B cell (primary cell): ENCODE measurements at regions of chr5 and their contacts with region 1.

Region 1: DNA sequence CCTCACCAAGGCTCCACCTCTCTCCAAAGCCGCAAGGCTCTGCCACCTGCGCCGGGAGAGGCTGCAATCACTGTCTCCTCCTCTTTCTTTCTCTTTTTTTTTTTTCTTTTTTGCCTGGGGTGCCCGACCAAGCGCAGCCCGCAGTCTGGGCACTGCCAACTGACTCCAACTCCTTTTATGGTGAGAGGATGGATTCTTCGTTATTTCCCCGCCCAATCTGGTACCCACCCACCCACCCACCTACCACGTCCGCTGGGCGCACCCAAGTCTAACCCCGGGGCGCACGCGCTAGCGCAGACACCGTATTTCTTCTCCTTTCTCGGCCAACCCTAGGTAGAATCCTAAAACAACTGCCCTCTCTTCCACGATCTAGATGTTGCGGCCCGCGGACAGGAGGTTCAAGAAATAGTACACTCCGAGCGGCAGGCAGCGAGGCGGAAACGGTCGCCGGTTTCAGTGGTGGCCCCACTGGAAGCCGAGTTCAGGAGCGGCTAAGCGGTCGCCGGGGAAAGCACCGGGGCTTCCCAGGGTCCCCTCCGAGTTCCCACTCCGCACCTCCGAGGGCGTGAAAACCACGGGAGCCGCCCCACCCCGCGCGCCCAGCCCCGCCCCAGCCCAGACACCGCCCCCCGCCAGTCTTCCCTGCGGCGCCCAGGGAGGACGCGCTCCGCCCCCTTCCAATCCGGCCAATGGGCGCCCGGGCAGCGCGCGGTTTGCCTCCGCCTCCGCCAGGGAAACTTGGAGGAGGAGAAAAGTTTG is 381 bp upstream of the PTGER4 start:
- DNase-seq: peak; percentile 86
- ATAC-seq: peak; percentile 77
- H3K4me3 ChIP-seq: peak overlapping the region; percentile 80 to 89 (median 84)
- H3K4me3 Mint-ChIP-seq: peak overlapping the region; percentile 94
- H3K27ac ChIP-seq: peak overlapping the region; percentile 89 to 96
- H3K27ac Mint-ChIP-seq: peak overlapping the region; percentile 92
- H3K4me1 ChIP-seq: peaks cover 28 to 39% of the 10 kb centered on the region in 2 donors
- H3K4me1 Mint-ChIP-seq: peaks cover 49% of the 10 kb centered on the region
- H3K27me3 ChIP-seq: no peaks in the 10 kb centered on the region
- H3K27me3 Mint-ChIP-seq: no peaks in the 10 kb centered on the region
- CTCF ChIP-seq: no peak

Region 2: DNA sequence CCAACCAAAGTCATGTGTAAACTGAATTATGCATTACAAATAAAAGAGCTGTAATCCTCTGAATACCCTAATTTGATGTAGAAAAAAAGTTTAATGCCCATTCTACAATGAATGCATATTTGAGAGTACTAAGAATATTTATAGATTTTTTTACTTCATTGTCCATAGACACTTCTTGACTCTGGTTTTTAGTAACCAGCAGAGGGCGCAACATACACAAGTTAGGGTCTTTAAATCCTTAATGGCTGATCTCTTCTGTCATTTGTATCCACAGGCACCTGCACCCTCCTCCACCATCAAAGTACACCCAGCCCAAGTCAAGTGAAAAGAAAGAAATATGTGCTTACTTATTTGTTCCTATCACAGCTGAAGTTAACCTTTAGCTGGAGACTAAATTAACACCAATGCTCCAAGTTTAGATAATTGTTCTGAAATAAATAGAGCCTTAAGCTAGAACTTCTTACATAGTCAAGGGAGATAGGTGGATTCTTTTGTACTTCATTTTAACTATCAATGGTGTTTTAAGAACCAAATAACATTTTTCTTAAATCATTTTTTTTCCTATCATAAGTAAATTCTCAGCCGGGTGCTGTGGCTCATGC is 730.4 kb before region 1 on chr5:
- CTCF ChIA-PET with region 1: interaction called, 51 read pairs
- POLR2A ChIA-PET with region 1: no interaction called
- intact Hi-C with region 1: no loop called
- DNase-seq: peak; percentile 82
- ATAC-seq: peak; percentile 80
- H3K4me3 ChIP-seq: no peak overlapping the region
- H3K4me3 Mint-ChIP-seq: no peak overlapping the region
- H3K27ac ChIP-seq: no peak overlapping the region
- H3K27ac Mint-ChIP-seq: no peak overlapping the region
- H3K4me1 ChIP-seq: no peaks in the 10 kb centered on the region
- H3K4me1 Mint-ChIP-seq: peaks cover 2% of the 10 kb centered on the region
- H3K27me3 ChIP-seq: no peaks in the 10 kb centered on the region
- H3K27me3 Mint-ChIP-seq: no peaks in the 10 kb centered on the region
- CTCF ChIP-seq: peak; percentile 81

Region 3: GRCh38 chr5:40033411-40033810 is 645.9 kb before region 1 on chr5:
- CTCF ChIA-PET with region 1: interaction called, 3 read pairs
- POLR2A ChIA-PET with region 1: interaction called, 3 read pairs
- intact Hi-C with region 1: loop called (anchors 1 kb)
- DNase-seq: peak; percentile 94
- ATAC-seq: peak; percentile 98
- H3K4me3 ChIP-seq: peak overlapping the region in 1 of 5 experiments; percentile 20
- H3K4me3 Mint-ChIP-seq: peak overlapping the region; percentile 66
- H3K27ac ChIP-seq: peak overlapping the region; percentile 92
- H3K27ac Mint-ChIP-seq: peak overlapping the region; percentile 93
- H3K4me1 ChIP-seq: peaks cover 20 to 26% of the 10 kb centered on the region in 2 donors
- H3K4me1 Mint-ChIP-seq: peaks cover 31% of the 10 kb centered on the region
- H3K27me3 ChIP-seq: no peaks in the 10 kb centered on the region
- H3K27me3 Mint-ChIP-seq: no peaks in the 10 kb centered on the region
- CTCF ChIP-seq: no peak

Region 4: GRCh38 chr5:40486437-40487275 is 192.7 kb before region 1 on chr5:
- CTCF ChIA-PET with region 1: interaction called, 3 read pairs
- POLR2A ChIA-PET with region 1: no interaction called
- intact Hi-C with region 1: loop called (anchors 2 kb)
- DNase-seq: peak; percentile 86
- ATAC-seq: peak; percentile 42
- H3K4me3 ChIP-seq: peak overlapping the region in 1 of 5 experiments; percentile 4
- H3K4me3 Mint-ChIP-seq: peak overlapping the region; percentile 79
- H3K27ac ChIP-seq: peak overlapping the region; percentile 42 to 75
- H3K27ac Mint-ChIP-seq: peak overlapping the region; percentile 73
- H3K4me1 ChIP-seq: peaks cover 46 to 58% of the 10 kb centered on the region in 2 donors
- H3K4me1 Mint-ChIP-seq: peaks cover 65% of the 10 kb centered on the region
- H3K27me3 ChIP-seq: no peaks in the 10 kb centered on the region
- H3K27me3 Mint-ChIP-seq: no peaks in the 10 kb centered on the region
- CTCF ChIP-seq: no peak

Region 5: DNA sequence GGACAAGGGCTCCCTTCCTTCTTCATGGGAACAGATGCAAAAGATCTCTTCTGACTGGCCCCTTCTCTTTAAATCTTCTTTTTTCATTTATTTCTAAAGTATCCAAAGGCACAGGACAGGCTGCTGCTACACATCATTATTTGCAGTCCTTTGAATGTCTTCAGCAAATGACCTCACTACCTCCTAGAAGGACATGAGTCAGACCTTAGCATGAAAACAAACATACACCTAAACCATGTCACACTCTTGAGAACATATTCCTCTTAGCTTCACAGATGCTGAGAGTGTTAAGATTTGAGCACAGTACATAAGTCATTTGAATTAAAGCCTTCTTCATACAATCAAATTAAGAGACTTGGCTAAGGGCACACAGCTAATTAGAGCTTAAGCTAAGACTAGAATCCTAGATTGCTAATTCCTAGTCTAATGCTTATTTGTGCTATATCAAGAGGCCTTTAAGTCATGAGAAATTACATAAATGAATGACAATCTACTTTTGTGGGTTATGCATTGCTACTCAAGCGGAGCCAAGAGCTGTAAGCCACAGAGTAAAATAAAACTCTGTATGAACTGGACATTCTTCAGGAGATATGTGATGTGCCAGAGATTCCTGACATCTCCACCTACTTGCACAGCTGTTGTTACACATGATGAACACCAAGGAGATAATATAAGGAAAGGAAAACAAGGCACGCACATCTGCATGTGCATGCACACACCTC is 108.8 kb before region 1 on chr5:
- CTCF ChIA-PET with region 1: interaction called, 4 read pairs
- POLR2A ChIA-PET with region 1: interaction called, 6 read pairs
- intact Hi-C with region 1: loop called (anchors 5 kb)
- DNase-seq: peak; percentile 53
- ATAC-seq: peak; percentile 75
- H3K4me3 ChIP-seq: no peak overlapping the region
- H3K4me3 Mint-ChIP-seq: peak overlapping the region; percentile 66
- H3K27ac ChIP-seq: no peak overlapping the region
- H3K27ac Mint-ChIP-seq: peak overlapping the region; percentile 76
- H3K4me1 ChIP-seq: peaks cover 34 to 38% of the 10 kb centered on the region in 2 donors
- H3K4me1 Mint-ChIP-seq: peaks cover 35% of the 10 kb centered on the region
- H3K27me3 ChIP-seq: no peaks in the 10 kb centered on the region
- H3K27me3 Mint-ChIP-seq: peaks cover 4% of the 10 kb centered on the region
- CTCF ChIP-seq: no peak

Region 6: GRCh38 chr5:40584054-40584453 is 95.3 kb before region 1 on chr5:
- CTCF ChIA-PET with region 1: no interaction called
- POLR2A ChIA-PET with region 1: no interaction called
- intact Hi-C with region 1: no loop called
- DNase-seq: no peak
- ATAC-seq: no peak
- H3K4me3 ChIP-seq: no peak overlapping the region
- H3K4me3 Mint-ChIP-seq: no peak overlapping the region
- H3K27ac ChIP-seq: no peak overlapping the region
- H3K27ac Mint-ChIP-seq: no peak overlapping the region
- H3K4me1 ChIP-seq: peaks cover 4 to 8% of the 10 kb centered on the region in 2 donors
- H3K4me1 Mint-ChIP-seq: peaks cover 14% of the 10 kb centered on the region
- H3K27me3 ChIP-seq: no peaks in the 10 kb centered on the region
- H3K27me3 Mint-ChIP-seq: no peaks in the 10 kb centered on the region
- CTCF ChIP-seq: no peak

Region 7: DNA sequence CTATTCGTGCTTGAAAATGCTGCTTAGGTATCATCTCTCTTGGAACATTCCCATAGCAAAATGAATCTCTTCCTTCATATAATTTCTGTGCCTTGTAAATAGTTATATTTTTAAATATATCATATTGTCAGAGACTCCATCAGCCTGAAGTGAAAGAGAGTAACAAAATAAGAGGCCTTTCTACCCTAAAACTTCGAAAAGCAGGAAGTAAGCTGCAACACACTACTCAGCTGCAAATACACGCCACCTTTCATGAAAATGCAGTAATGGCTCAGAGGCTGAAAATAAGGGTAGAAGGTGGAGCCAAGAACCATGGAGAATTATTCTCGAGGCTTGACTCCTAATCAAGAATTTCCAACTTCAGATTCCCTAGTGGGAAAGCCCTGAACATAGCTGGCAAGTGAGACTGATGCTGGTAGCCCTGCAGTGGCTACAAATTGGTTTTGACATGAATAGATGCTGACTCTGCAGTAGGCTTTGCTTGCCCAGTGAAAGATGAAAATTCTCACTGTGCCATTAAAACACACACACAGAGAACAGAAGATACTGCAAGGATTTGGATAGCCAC is 29.8 kb before region 1 on chr5:
- CTCF ChIA-PET with region 1: interaction called, 3 read pairs
- POLR2A ChIA-PET with region 1: interaction called, 3 read pairs
- intact Hi-C with region 1: loop called (anchors 2 kb)
- DNase-seq: peak; percentile 44
- ATAC-seq: peak; percentile 39
- H3K4me3 ChIP-seq: no peak overlapping the region
- H3K4me3 Mint-ChIP-seq: no peak overlapping the region
- H3K27ac ChIP-seq: no peak overlapping the region
- H3K27ac Mint-ChIP-seq: peak overlapping the region; percentile 11
- H3K4me1 ChIP-seq: peaks cover 27 to 30% of the 10 kb centered on the region in 2 donors
- H3K4me1 Mint-ChIP-seq: peaks cover 35% of the 10 kb centered on the region
- H3K27me3 ChIP-seq: no peaks in the 10 kb centered on the region
- H3K27me3 Mint-ChIP-seq: no peaks in the 10 kb centered on the region
- CTCF ChIP-seq: no peak

Region 8: DNA sequence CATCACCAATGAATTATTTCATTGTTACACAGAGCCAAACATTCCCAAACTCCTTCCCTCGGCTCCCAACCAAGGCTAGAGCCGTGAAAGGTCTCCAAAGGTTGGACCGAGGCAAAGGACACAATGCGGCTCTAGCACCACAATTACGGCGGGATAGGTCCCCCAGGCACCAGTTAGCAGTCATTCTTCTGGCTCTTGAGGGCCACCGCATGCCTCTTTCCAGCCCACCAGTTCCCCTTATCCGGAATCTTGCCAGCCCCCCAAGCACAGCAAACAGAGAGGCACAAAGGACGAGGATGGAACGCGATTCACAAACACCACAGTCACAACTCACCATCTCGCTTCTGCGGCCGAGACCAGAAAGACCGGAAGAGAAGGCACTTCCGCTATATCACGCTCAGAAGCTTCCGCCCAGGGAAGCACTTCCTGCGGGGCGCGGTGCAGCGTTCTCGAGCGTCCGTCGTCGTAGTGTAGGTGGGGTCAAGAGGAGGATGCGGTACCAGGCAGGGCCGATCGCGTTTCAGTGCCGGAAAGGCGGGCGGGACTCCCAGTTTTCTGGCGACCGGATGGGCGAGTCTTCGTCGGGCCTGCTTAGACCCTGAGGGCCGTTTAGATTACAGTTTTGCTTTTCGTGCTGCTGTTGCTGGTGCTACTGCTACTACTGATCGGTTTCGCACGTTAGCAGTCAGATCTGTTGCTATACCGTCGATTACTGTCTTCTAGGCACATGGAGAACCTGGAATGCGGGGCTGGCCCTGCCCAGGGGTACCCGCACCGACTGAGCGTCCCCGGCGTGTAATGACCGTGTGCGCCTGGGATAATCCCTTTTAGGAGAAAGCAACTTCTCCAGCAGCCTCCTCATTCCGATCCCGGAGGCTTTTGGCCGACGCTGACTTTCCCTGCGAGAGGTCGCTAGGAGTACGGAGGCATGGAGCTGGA is 155.8 kb after region 1 on chr5 and contains the start of gene RPL37:
- CTCF ChIA-PET with region 1: interaction called, 3 read pairs
- POLR2A ChIA-PET with region 1: no interaction called
- intact Hi-C with region 1: loop called (anchors 1 kb)
- DNase-seq: peak; percentile 95
- ATAC-seq: peak; percentile 98
- H3K4me3 ChIP-seq: peak within 1 kb of the TSS; percentile 74 to 99 (median 89)
- H3K4me3 Mint-ChIP-seq: peak within 1 kb of the TSS; percentile 99
- H3K27ac ChIP-seq: peak within 1 kb of the TSS; percentile 85 to 91
- H3K27ac Mint-ChIP-seq: peak within 1 kb of the TSS; percentile 98
- H3K4me1 ChIP-seq: peaks cover 21 to 23% of the 10 kb centered on the region in 2 donors
- H3K4me1 Mint-ChIP-seq: peaks cover 43% of the 10 kb centered on the region
- H3K27me3 ChIP-seq: no peaks in the 10 kb centered on the region
- H3K27me3 Mint-ChIP-seq: no peaks in the 10 kb centered on the region
- CTCF ChIP-seq: no peak
- total RNA-seq, gene RPL37: 1,932 and 2,240 TPM in 2 replicates